ENCODE measurements at regions of chr13 and their contacts with region 1.

Region 1: DNA sequence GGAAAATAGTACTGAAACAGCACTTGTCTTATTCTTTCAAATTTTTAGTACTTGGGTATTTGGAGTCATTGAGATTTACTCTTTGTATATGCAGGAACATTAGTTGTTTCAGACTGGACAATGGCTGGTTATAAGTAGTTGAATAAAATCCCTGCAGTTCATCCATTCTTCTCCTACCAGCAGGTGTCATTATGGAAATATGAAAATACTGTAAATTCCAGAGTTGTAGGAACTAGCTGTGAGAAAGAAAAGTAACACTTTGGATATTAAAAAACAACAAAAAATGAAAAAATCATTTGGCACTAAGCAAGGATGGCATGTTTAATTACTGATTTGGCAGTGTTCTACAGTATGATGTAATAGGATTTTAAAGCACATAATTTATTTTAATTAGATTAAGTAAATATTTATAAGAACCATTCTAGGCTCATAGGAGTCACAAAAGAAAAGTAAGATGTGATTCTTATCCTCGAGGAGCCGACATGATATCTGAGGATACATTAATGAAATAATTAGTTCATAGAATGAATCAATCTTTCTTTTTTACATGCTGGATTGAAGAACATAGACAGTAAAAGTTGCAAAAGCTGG is 155.3 kb downstream of the KCNRG start:
- DNase-seq: peak; percentile 32
- ATAC-seq: no peak; the same call in 1 of the 2 replicates
- H3K4me3 ChIP-seq: no peak overlapping the region
- H3K27ac ChIP-seq: no peak overlapping the region
- H3K4me1 ChIP-seq: no peaks in the 10 kb centered on the region
- H3K27me3 ChIP-seq: no peaks in the 10 kb centered on the region
- CTCF ChIP-seq: peak; percentile 62

Region 2: DNA sequence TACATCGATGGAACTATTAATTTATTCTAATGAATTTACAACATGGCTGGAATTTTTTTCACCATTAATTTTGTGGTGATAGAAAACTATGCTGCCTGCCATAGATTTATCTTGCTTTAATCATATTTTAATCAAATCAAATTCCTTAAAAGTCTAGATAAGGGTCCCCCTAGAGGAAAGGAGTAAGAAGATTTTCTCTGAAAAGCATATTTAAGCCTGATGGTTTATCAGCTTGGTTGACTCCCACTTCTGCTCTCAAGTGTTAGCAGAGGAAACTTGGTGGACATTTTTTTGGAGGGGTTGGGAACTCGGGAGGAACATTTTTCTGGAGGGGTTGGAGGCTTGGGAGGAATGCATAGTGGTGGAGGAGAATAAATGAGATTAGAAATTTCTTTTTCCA is 98.0 kb after region 1 on chr13:
- CTCF ChIA-PET with region 1: interaction called, 3 read pairs
- POLR2A ChIA-PET with region 1: no interaction called
- intact Hi-C with region 1: loop called (anchors 1 kb)
- DNase-seq: no peak
- ATAC-seq: no peak
- H3K4me3 ChIP-seq: no peak overlapping the region
- H3K27ac ChIP-seq: no peak overlapping the region
- H3K4me1 ChIP-seq: no peaks in the 10 kb centered on the region; the same call in 1 of the 2 replicates
- H3K27me3 ChIP-seq: no peaks in the 10 kb centered on the region
- CTCF ChIP-seq: peak; percentile 40; the same call in 1 of the 2 replicates